ENCODE measurements at regions of chr6 and their contacts with region 1.

Region 1: DNA sequence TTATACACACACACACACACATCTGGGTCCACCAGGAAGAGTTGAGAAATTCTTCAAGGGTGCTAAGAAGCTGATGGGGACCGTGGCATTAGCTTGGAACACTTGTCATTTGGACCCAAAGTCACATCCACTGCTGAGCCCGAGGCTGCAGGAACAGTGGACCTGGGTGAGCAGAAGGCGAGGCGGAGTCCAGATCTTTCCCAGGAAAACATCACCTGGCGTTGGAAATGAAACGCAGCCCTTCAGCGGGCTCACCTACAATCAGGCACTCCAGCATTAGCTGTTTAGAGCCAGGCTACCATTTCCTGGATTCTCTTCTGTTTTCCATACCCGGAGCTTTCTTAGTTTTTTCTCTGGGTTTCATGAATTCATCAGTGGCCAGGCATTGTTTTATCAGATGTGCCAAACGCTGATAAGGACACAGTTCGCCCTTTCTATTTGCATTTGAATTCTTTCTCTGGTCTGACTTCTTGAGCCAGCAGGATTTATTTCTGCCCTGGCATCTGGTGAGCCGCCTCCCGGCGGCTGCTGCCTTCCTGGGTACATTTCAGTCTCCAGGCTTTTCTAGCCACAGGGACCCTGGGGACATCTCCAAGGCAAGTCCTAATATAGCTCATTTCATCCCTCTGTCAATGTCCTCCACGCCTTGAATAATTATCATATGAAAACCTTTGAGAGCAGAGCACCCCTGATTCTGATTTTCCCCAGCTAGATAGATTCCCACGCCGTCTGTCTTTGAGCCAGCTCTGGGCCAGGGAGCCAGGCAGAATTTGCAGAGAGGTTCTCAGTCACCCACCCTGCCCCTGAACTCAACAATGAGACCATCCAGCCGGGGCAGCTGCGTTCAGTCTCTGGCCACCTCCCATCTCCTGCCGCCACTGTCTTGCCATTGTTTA is 170.9 kb downstream of the TTLL2 start:
- DNase-seq: no peak
- H3K4me3 ChIP-seq: no peak overlapping the region
- H3K27ac ChIP-seq: no peak overlapping the region
- H3K4me1 ChIP-seq: no peaks in the 10 kb centered on the region
- H3K27me3 ChIP-seq: no peaks in the 10 kb centered on the region
- CTCF ChIP-seq: no peak

Region 2: GRCh38 chr6:167426651-167427050 is 69.1 kb before region 1 on chr6:
- CTCF ChIA-PET with region 1: no interaction called
- dilution Hi-C with region 1: loop called (anchors 5 kb)
- in situ Hi-C with region 1: no loop called
- intact Hi-C with region 1: no loop called
- DNase-seq: no peak
- H3K4me3 ChIP-seq: no peak overlapping the region
- H3K27ac ChIP-seq: no peak overlapping the region
- H3K4me1 ChIP-seq: no peaks in the 10 kb centered on the region
- H3K27me3 ChIP-seq: no peaks in the 10 kb centered on the region
- CTCF ChIP-seq: no peak